Panc1 (cell line): ENCODE measurements at regions of chr3 and their contacts with region 1.

Region 1: DNA sequence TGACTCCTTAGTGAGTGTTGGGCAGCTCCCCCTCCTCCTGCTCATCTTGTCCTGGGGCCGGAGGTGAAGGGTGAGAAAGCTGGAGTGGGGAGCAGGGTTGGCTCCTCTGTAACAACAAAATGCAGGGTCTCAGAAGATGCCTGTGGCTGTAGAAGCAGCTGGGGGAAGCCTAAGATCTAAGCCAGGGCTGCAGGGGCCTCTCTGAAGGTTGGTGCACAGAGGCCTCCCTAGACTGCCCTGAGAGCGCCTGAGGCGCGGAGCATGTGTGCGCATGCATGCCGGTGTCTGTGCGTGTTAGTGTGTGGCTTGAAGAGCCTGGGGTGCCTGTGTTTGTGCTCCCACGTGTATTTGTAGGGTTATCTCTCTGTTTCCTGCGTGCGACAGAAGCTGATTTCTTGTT is 5.3 kb upstream of the HDAC11 start:
- DNase-seq: no peak
- ATAC-seq: no peak
- H3K4me3 ChIP-seq: no peak overlapping the region
- H3K27ac ChIP-seq: no peak overlapping the region
- H3K4me1 ChIP-seq: no peaks in the 10 kb centered on the region
- H3K27me3 ChIP-seq: no peaks in the 10 kb centered on the region
- CTCF ChIP-seq: no peak

Region 2: GRCh38 chr3:13573884-13574797 is 99.3 kb after region 1 on chr3:
- CTCF ChIA-PET with region 1: interaction called, 12 read pairs
- POLR2A ChIA-PET with region 1: no interaction called
- in situ Hi-C with region 1: no loop called
- intact Hi-C with region 1: no loop called
- DNase-seq: no peak
- ATAC-seq: no peak
- H3K4me3 ChIP-seq: no peak overlapping the region
- H3K27ac ChIP-seq: no peak overlapping the region
- H3K4me1 ChIP-seq: no peaks in the 10 kb centered on the region
- H3K27me3 ChIP-seq: no peaks in the 10 kb centered on the region
- CTCF ChIP-seq: no peak